Astrocyte of the cerebellum (primary cell): ENCODE measurements at regions of chr12 and their contacts with region 1.

Region 1: DNA sequence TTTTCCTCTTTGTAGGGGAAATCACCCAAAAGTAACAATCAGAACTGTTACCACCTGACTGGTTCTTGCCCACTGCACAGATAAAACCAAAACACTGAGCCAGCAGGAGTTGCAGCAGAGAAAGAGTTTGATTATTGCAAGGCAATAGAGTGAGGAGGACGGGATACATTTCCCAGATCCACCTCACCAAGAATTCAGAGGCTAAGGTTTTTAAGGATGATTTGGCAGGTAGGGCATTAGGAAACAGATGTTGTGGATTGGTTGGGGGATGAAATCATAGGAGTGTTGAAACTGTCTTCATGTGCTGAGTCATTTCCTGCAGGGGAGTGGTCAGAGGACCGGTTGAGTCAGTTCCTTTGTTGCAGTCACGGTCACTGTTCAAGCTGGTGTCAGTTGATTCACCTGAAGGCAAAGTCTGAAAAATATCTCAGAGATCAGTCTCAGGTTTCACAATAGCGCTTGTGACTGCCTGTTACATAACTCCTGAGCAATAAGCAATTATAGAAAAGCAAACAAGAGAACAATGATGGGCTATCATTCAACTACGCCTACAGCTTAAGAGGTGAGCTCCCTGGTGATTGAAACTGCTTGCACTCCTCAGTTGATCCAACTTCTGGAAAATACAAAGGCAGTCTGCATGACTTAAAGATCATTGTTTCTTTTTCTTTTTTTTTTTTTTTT is 20.3 kb upstream of the AMN1 start:
- DNase-seq: peak; percentile 88
- H3K4me3 ChIP-seq: no peak overlapping the region
- CTCF ChIP-seq: no peak

Region 2: DNA sequence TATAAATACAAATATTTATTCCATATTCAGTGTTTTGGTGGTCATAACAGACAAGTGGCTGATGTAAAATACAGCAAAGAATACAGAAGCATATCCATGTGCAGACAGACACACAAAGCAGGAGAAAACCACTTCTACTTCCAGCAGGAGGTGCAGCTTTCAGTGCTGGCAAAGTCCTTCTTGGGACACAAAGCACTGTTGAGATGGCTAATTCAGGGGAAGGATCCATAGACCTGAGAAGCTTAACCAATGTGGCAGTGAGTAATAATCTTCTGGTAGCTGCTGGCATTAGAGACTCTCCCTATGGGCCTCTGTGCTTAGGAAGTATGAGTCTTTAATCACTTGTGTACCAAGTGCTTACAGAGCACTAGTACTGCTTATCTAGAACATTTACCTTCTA is 47.1 kb before region 1 on chr12:
- in situ Hi-C with region 1: no loop called
- DNase-seq: no peak
- H3K4me3 ChIP-seq: no peak overlapping the region
- CTCF ChIP-seq: no peak

Region 3: DNA sequence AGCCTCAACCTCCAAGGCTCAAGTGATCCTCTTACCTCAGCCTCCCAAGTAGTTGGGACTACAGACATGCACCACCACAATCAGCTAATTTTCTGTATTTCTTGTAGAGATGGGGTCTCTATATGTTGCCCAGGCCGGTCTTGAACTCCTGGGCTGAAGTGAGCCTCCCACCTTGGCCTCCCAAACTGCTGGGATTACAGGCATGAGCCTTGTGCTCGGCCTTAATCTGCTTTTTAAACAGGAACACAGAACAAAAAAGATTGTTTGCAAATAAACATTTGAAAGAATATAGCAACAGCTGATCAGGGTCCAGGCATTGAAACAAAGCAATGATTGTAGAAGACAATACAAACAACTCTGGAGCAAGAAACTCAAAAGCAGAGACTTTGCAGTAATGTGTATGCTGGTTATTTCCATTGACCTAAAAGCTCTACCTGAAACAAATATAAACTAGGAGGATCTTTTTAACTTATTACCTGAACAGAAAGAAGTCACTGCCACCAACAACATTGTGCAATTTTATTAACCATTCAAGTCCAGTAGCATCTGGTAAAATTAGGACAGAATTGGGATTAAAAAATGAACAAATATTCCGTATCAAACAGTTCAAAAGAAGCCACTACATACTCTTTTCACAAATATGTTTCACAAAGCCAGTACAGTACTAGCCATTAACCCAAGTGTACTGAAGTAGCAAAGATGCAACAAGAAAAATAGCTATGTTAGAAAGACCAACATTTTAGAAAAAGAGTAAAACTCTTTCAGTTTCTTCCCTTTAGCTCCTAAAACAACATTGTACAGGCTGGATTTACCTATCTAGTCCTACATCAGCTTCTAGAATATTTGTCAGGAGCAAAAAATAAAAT is 34.5 kb before region 1 on chr12:
- in situ Hi-C with region 1: no loop called
- DNase-seq: no peak
- H3K4me3 ChIP-seq: no peak overlapping the region
- CTCF ChIP-seq: no peak

Region 4: DNA sequence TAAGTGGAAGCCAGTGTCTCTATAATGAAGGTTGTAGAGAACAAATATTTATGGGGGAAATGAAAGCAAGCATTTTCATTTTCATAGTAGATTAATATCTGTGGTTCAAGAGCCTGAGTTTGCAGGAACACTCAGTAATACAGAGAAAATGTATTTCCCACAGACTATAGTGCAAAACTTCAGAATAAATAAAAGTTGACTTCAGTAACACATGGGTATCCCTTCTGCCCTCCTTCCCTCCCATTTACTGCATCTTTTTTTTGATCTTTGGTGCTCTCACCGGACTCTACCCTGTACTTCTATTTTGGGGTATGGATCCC is 55.0 kb after region 1 on chr12:
- in situ Hi-C with region 1: no loop called
- DNase-seq: no peak
- H3K4me3 ChIP-seq: no peak overlapping the region
- CTCF ChIP-seq: no peak

Region 5: GRCh38 chr12:31959161-31959700 is 210.1 kb after region 1 on chr12 and contains the start of gene RESF1:
- in situ Hi-C with region 1: loop called (anchors 10 kb)
- DNase-seq: peak; percentile 33
- H3K4me3 ChIP-seq: peak within 1 kb of the TSS; percentile 71
- CTCF ChIP-seq: no peak

Region 6: GRCh38 chr12:32181498-32182175 is 432.5 kb after region 1 on chr12:
- in situ Hi-C with region 1: no loop called
- DNase-seq: no peak
- H3K4me3 ChIP-seq: no peak overlapping the region
- CTCF ChIP-seq: no peak